ENCODE measurements at regions of chr16 and their contacts with region 1.

Region 1: GRCh38 chr16:2142942-2143877 is 5.2 kb upstream of the RAB26 start:
- DNase-seq: no peak
- ATAC-seq: no peak

Region 2: GRCh38 chr16:2023098-2023925 is 119.9 kb before region 1 on chr16:
- intact Hi-C with region 1: loop called (anchors 2 to 5 kb)
- DNase-seq: peak; percentile 93
- ATAC-seq: peak; percentile 89 to 90

Measured in left cardiac atrium (tissue), 4 donors.